ENCODE measurements at regions of chr10 and their contacts with region 1.

Region 1: GRCh38 chr10:103244663-103245271 is 920 bp upstream of the RPEL1 start:
- DNase-seq: peak; percentile 33 to 74 (median 44)
- H3K4me3 ChIP-seq: no peak overlapping the region
- H3K4me3 Mint-ChIP-seq: peak overlapping the region in 1 of 7 donors; percentile 38
- H3K27ac ChIP-seq: no peak overlapping the region
- H3K27ac Mint-ChIP-seq: no peak overlapping the region
- H3K4me1 ChIP-seq: no peaks in the 10 kb centered on the region
- H3K4me1 Mint-ChIP-seq: peaks cover 5 to 13% (median 7%) of the 10 kb centered on the region in 3 donors
- H3K27me3 ChIP-seq: no peaks in the 10 kb centered on the region
- H3K27me3 Mint-ChIP-seq: peaks cover 7 to 20% of the 10 kb centered on the region in 2 donors

Region 2: GRCh38 chr10:102835007-102835482 is 409.7 kb before region 1 on chr10:
- CTCF ChIA-PET with region 1: interaction called, 13 read pairs
- POLR2A ChIA-PET with region 1: no interaction called
- DNase-seq: peak; percentile 54 to 77 (median 60)
- H3K4me3 ChIP-seq: no peak overlapping the region
- H3K4me3 Mint-ChIP-seq: no peak overlapping the region
- H3K27ac ChIP-seq: no peak overlapping the region
- H3K27ac Mint-ChIP-seq: peak overlapping the region in 1 of 8 donors; percentile 24
- H3K4me1 ChIP-seq: no peaks in the 10 kb centered on the region
- H3K4me1 Mint-ChIP-seq: no peaks in the 10 kb centered on the region
- H3K27me3 ChIP-seq: no peaks in the 10 kb centered on the region
- H3K27me3 Mint-ChIP-seq: peaks cover 11 to 25% of the 10 kb centered on the region in 2 donors

Region 3: DNA sequence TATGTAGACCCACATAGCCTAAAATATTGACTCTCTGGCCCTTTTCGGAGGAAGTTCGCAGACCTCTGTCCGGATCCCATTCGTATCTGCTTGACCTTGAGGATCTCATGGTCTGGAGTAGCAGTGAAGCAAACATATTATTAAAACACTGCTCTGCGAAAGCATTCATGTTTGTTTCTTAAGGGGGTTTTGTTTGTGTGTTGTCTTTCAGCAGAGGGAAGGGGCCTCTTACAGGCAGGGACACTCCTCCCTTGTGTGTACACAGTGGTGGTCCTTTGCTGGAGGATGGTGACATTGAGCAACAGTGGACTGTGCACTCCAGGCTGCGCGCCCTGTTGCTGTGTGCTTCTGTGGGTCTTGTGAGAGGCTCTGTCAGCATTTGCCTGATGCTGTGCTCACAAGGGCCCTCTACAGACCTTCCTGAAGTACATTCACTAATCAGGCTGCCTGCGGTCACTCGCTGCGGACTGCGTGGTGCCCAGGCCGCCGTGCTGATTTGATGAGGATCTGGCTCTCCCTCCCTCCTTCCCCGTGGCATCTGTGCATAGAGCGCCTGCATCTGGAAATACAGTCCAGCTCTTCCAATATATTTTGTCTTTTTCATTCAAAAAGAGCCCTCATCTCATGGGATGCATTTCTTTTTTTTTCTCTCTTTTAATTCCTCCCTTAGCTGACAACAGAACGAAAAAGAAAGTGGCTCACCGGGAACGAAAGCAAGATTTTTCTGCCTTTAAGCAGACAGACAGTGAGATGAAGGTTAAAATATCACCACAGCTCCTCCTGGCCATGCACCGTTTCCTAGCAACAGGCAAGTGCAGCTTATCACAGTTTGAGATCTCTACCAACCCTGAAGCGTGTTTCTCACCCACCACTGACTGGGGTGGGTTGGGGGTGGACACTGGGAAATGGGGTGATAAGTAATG is 190.8 kb before region 1 on chr10:
- CTCF ChIA-PET with region 1: no interaction called
- POLR2A ChIA-PET with region 1: interaction called, 16 read pairs
- DNase-seq: peak; percentile 42 to 86 (median 72)
- H3K4me3 ChIP-seq: peak overlapping the region; percentile 61
- H3K4me3 Mint-ChIP-seq: peak overlapping the region; percentile 83 to 94 (median 89)
- H3K27ac ChIP-seq: peak overlapping the region; percentile 71
- H3K27ac Mint-ChIP-seq: peak overlapping the region; percentile 77 to 98 (median 94)
- H3K4me1 ChIP-seq: peaks cover 13% of the 10 kb centered on the region
- H3K4me1 Mint-ChIP-seq: peaks cover 20 to 23% (median 22%) of the 10 kb centered on the region in 3 donors
- H3K27me3 ChIP-seq: no peaks in the 10 kb centered on the region
- H3K27me3 Mint-ChIP-seq: no peaks in the 10 kb centered on the region

Region 4: GRCh38 chr10:103678178-103678526 is 433.4 kb after region 1 on chr10:
- CTCF ChIA-PET with region 1: no interaction called
- POLR2A ChIA-PET with region 1: no interaction called
- DNase-seq: peak; percentile 82 to 93 (median 83)
- H3K4me3 ChIP-seq: peak overlapping the region; percentile 68
- H3K4me3 Mint-ChIP-seq: peak overlapping the region; percentile 61 to 91 (median 86)
- H3K27ac ChIP-seq: peak overlapping the region; percentile 67
- H3K27ac Mint-ChIP-seq: peak overlapping the region; percentile 72 to 99 (median 96)
- H3K4me1 ChIP-seq: peaks cover 20% of the 10 kb centered on the region
- H3K4me1 Mint-ChIP-seq: peaks cover 11 to 30% (median 11%) of the 10 kb centered on the region in 3 donors
- H3K27me3 ChIP-seq: no peaks in the 10 kb centered on the region
- H3K27me3 Mint-ChIP-seq: peaks cover 0 to 2% of the 10 kb centered on the region in 2 donors